Activated naive CD4-positive, alpha-beta T cell treated with anti-CD3 and anti-CD28 coated beads for 36 hours (primary cell): ENCODE measurements at regions of chr7 and their contacts with region 1.

Region 1: GRCh38 chr7:76234931-76235441 is 33.3 kb downstream of the SRRM3 start:
- DNase-seq: peak; percentile 90
- H3K4me3 Mint-ChIP-seq: peak overlapping the region; percentile 39
- H3K27ac Mint-ChIP-seq: no peak overlapping the region
- H3K4me1 Mint-ChIP-seq: peaks cover 4% of the 10 kb centered on the region
- H3K27me3 Mint-ChIP-seq: peaks cover 56% of the 10 kb centered on the region

Region 2: DNA sequence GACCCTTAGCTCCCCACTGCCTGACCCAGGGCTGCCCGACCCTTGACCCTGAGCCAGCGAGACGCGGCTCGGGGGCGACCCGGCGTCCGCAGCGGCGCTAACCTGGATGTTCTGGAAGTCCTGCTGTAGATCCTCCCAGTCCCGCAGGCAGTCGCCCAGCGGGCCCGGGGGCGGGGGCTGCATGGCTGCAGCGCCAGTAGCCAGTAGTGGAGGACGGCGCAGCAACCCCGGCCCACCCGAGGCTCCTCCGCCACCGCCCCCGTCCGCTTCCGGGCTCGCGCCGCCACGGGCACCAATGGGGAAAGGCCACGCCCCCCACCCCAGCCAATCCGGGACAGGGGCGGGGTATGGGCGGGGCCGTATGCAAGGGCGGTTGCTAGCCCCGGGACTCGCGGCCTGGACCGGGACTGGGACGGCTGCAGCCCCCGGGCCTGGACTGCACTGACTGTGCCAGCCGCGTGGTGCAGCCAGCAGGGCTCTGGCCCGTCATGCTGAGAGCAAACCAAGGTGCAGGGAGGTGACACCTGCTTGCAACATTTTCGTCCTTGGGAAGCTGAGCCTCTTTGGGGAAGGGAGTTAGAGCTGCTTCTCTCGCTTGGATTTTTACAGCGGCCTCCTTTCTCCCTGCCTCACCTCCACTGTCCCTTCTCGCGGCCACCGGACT is 240.5 kb before region 1 on chr7 and contains the start of gene TMEM120A:
- CTCF ChIA-PET with region 1: no interaction called
- intact Hi-C with region 1: loop called (anchors 10 kb)
- DNase-seq: peak; percentile 94
- H3K4me3 Mint-ChIP-seq: peak within 1 kb of the TSS; percentile 64
- H3K27ac Mint-ChIP-seq: no peak within 1 kb of the TSS
- H3K4me1 Mint-ChIP-seq: peaks cover 23% of the 10 kb centered on the region
- H3K27me3 Mint-ChIP-seq: no peaks in the 10 kb centered on the region
- total RNA-seq, gene TMEM120A: 17.0 to 22.4 TPM

Region 3: GRCh38 chr7:76020031-76020714 is 214.8 kb before region 1 on chr7:
- CTCF ChIA-PET with region 1: no interaction called
- intact Hi-C with region 1: no loop called
- DNase-seq: peak; percentile 83
- H3K4me3 Mint-ChIP-seq: no peak overlapping the region
- H3K27ac Mint-ChIP-seq: no peak overlapping the region
- H3K4me1 Mint-ChIP-seq: peaks cover 3% of the 10 kb centered on the region
- H3K27me3 Mint-ChIP-seq: no peaks in the 10 kb centered on the region

Region 4: GRCh38 chr7:76262683-76263402 is 27.9 kb after region 1 on chr7:
- CTCF ChIA-PET with region 1: no interaction called
- intact Hi-C with region 1: loop called (anchors 1 kb)
- DNase-seq: peak; percentile 60
- H3K4me3 Mint-ChIP-seq: no peak overlapping the region
- H3K27ac Mint-ChIP-seq: no peak overlapping the region
- H3K4me1 Mint-ChIP-seq: peaks cover 4% of the 10 kb centered on the region
- H3K27me3 Mint-ChIP-seq: peaks cover 21% of the 10 kb centered on the region